ENCODE measurements at regions of chr4 and their contacts with region 1.

Region 1: GRCh38 chr4:95537191-95537590 is 11.6 kb downstream of the UNC5C start:
- DNase-seq: no peak

Region 2: GRCh38 chr4:95216288-95216605 is 320.9 kb before region 1 on chr4:
- intact Hi-C with region 1: no loop called
- DNase-seq: no peak

Region 3: DNA sequence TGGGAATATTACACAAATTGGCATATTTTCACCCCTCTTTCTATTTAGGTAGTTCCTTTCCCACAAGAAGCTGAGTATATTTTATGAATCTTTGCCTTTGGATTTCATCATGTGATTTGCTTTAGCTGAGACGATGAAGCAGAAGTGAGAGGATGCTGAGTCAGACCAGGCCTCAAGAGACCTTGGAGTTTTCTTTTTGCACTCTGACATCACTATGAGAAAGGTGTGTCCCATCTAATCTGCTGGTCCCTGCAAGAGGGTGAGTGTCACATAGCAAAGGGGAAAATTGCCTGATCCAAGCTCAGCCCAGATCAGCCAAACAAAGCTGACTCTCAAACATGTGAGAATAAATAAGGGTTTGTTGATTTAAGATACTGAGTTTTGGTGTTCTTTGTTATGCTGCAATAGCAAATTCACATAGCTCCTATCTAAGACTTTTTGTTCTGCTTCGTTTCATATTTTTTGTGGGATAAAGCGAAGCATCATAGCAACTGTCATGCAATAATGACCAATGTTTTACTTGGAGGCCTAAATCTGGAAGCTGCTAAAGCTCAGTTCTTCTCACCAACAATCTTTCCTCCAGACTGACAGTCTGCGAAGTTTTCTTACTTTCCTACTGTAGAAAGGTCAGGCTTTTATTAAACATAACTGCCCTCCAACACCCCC is 479.6 kb after region 1 on chr4:
- intact Hi-C with region 1: loop called (anchors 5 kb)
- DNase-seq: no peak